Right ventricle myocardium superior (tissue), 1 donor: ENCODE measurements at regions of chr14 and their contacts with region 1.

Region 1: GRCh38 chr14:75982266-75983018 is 647 bp upstream of the TGFB3 start:
- DNase-seq: peak; percentile 90
- ATAC-seq: peak; percentile 81

Region 2: GRCh38 chr14:75709207-75709812 is 273.1 kb before region 1 on chr14:
- intact Hi-C with region 1: loop called (anchors 2 kb)
- DNase-seq: peak; percentile 76
- ATAC-seq: peak; percentile 83

Region 3: GRCh38 chr14:75794615-75795038 is 187.8 kb before region 1 on chr14:
- intact Hi-C with region 1: loop called (anchors 2 kb)
- DNase-seq: no peak
- ATAC-seq: peak; percentile 92

Region 4: DNA sequence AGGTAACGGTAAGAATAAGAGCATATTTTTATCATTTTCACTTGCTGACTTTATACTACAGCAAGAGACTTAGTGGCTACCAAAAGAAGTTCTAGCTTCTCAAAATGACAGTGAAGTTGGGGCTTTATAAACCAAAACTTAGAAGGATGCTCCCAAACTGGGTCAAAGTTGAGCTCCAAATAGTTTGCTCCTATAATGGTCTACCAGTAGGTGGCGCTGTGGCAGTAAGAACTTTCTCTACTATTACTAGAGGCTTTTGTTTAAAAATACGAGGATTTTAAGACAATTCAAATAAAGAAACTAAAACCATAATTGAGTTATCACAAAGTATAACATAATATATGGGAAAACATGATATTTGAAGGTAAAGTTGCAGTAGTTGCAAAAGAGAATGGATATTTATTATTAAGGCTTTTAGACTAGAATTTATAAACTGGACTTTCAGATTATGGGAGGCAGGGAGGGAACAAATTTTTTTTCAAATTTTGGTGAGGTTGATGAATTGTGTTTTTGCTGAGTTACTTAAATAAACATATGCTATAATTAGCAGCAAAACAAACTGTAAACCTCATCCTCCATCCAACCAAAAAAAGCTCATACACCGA is 75.7 kb before region 1 on chr14:
- intact Hi-C with region 1: loop called (anchors 5 kb)
- DNase-seq: no peak
- ATAC-seq: peak; percentile 80

Region 5: DNA sequence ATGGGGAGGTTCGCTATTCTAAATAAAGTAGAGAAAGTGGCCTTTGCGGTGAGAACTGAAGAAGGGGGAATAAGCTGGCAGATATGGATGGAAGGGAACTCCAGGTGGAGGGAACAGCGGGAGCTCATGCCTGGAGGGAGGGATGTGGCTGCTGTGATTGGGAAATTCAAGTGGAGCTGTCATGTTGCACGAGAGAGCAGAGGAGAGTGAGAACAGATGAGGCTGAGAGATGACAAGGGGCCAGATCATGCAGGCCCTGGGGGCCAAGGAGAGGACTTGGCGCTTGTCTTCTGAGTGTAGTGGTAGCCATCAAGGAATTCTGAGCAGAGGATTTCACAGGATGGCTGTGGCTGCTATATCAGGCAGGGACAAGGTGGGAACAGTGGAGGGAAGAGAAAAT is 35.7 kb before region 1 on chr14:
- intact Hi-C with region 1: no loop called
- DNase-seq: no peak
- ATAC-seq: peak; percentile 39